Activated T-helper 1 cell treated with anti-CD3 and anti-CD28 coated beads, Interleukin-12 subunit alpha, Interleukin-12 subunit beta, Interleukin-2, Interleukin-4 antibody, amounts not matched to agents 30 ng/mL and 10 ng/mL and 1 ng/mL, durations not matched to agents 14 hours and 24 hours and 36 hours (primary cell): ENCODE measurements at regions of chr4 and their contacts with region 1.

Region 1: DNA sequence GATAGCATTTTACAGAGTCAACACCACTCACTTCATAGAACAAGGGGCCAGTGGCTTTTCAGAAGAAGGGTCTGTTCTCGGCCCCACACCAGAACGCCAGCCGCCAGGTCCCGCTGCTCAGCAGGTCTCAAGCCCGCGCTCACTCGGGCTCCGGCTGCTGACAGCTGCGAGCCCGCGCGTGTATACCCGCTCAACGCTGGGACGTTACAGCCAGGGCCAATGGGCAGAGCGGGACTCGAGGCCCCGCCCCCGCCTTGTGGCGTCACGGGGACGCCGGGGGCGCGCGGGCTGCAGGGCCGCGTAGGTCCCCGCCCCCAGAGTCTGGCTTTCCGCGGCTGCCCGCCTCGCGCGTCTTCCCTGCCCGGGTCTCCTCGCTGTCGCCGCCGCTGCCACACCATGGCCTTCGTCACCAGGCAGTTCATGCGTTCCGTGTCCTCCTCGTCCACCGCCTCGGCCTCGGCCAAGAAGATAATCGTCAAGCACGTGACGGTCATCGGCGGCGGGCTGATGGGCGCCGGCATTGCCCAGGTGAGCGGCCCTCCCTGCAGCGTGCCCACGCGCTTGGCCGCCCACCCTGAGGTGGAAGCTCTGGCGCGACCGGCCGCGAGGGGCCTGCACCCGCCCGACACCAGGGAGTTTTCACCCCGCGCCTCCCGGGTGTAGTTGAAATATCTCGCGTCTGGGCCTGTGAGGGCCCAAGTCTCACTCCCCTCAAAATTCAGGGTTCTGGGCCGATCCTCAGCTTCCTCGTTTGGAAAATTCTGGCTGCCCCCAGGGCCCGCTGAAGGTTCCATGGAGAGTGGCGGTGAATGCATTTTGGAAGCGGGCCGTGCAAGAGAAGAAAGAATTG is at the start of gene HADH:
- DNase-seq: peak; percentile 95
- H3K4me3 Mint-ChIP-seq: peak within 1 kb of the TSS; percentile 97
- H3K27ac Mint-ChIP-seq: peak within 1 kb of the TSS; percentile 96
- H3K4me1 Mint-ChIP-seq: peaks cover 57% of the 10 kb centered on the region
- H3K27me3 Mint-ChIP-seq: no peaks in the 10 kb centered on the region
- total RNA-seq, gene HADH: 33.9 and 36.8 TPM in 2 replicates

Region 2: DNA sequence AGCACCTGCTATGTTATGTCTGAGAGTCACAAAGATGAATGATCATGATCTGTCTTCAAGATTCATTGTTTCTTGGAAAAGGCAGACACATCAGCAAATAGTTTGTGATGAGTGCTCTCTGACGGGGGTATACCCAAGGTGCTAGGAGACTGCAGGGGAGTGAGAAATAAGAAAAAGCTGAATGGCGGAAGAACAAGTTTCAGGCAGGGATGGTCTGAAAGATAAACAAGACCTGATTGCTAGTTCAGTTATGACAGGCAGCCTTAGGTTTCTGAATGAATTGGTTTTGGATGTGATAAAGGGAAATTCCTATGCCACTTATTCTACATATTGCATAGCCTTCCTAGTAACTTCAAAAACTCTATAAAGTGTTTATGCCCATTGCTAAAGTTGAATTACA is 626.6 kb before region 1 on chr4:
- intact Hi-C with region 1: no loop called
- DNase-seq: no peak
- H3K4me3 Mint-ChIP-seq: no peak overlapping the region
- H3K27ac Mint-ChIP-seq: no peak overlapping the region
- H3K4me1 Mint-ChIP-seq: no peaks in the 10 kb centered on the region
- H3K27me3 Mint-ChIP-seq: no peaks in the 10 kb centered on the region

Region 3: DNA sequence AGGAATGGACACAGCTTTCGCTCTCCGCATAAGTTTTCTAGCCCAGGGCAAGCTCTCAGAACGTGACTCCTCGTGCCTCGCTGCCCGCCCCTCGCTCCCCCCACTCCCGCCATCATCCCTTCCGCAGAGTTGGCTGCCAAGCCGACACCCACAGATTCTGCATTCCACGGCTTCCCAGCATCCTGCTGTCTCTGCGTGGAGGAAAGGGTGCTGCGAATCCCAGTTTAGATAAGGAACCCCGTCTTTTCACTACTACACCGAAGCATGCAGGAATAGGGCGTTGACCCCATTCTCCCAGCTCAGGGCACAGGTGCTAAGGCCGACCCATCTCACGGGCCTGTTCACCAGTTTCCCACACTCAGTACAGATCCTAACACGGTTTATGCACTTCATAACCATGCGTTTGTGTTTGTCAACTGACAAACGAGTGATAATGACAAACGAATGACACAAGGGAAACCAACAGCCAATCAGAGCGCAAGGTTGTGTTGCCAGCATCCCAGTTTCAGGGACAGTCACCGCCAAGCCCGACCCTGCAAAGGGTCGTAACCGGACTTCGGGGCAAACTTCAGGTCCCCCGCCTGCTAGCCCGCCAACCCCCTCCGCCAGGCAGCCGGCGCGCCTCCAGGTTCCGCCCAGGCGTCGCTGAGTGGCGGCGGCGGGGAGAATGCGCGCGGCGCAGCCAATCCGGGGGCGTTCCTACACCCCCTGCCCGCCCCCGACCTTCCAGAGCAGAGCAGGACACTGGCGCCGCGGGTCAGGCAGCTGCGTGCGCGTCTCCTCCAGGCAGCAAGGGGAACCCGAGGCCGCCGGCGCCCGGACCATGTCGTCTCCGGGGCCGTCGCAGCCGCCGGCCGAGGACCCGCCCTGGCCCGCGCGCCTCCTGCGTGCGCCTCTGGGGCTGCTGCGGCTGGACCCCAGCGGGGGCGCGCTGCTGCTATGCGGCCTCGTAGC is 58.7 kb before region 1 on chr4 and contains the start of gene CYP2U1:
- intact Hi-C with region 1: loop called (anchors 1 kb)
- DNase-seq: peak; percentile 81
- H3K4me3 Mint-ChIP-seq: peak within 1 kb of the TSS; percentile 86
- H3K27ac Mint-ChIP-seq: peak within 1 kb of the TSS; percentile 82
- H3K4me1 Mint-ChIP-seq: peaks cover 20% of the 10 kb centered on the region
- H3K27me3 Mint-ChIP-seq: peaks cover 2% of the 10 kb centered on the region
- total RNA-seq, gene CYP2U1: 1.1 and 1.5 TPM in 2 replicates

Region 4: DNA sequence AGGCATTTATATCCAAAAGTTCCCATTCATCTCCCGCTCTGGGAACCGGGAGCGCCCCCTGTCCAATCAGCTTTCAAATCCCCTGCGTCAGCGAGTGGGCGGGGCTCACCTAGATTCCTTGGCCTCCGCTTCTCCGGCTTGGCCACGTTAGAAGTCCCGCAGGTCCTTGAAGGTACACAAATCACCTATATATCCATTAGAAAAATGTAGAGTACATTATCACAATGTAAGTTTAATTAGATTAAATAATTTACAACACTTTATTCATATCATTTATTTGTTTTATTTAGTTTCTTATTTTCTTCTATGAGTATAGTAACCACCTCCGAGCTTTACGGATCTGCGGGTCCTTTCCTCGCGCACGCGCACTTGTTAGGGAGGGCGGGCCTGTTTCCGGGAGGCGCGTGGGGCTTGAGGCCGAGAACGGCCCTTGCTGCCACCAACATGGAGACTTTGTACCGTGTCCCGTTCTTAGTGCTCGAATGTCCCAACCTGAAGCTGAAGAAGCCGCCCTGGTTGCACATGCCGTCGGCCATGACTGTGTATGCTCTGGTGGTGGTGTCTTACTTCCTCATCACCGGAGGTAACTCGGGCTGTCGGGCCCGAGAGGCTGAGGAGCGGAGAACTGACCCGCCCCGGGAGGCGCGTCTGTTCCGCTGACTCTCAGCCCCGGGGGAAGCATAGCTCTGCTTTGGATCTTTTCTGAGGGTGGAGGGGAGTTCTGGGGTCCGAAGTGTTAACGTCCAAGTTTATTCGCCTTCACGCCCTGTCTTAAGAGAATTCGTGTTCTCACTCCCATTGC is 660.7 kb after region 1 on chr4 and contains the start of gene OSTC:
- intact Hi-C with region 1: loop called (anchors 1 kb)
- DNase-seq: peak; percentile 90
- H3K4me3 Mint-ChIP-seq: peak within 1 kb of the TSS; percentile 99
- H3K27ac Mint-ChIP-seq: peak within 1 kb of the TSS; percentile 93
- H3K4me1 Mint-ChIP-seq: peaks cover 39% of the 10 kb centered on the region
- H3K27me3 Mint-ChIP-seq: no peaks in the 10 kb centered on the region
- total RNA-seq, gene OSTC: 96.1 and 96.7 TPM in 2 replicates